ENCODE measurements at regions of chr13 and their contacts with region 1.

Region 1: GRCh38 chr13:95191821-95192563 is 109.3 kb downstream of the ABCC4 start:
- DNase-seq: peak; percentile 72 to 89 (median 76)
- ATAC-seq: peak; percentile 81 to 96 (median 92)
- H3K4me3 ChIP-seq: no peak overlapping the region
- H3K27ac ChIP-seq: no peak overlapping the region
- H3K4me1 ChIP-seq: peaks cover 0 to 2% (median 0%) of the 10 kb centered on the region in 12 donors
- H3K27me3 ChIP-seq: no peaks in the 10 kb centered on the region
- CTCF ChIP-seq: peak; percentile 77 to 90 (median 86)
- POLR2A ChIP-seq: no peak

Region 2: GRCh38 chr13:95267662-95268342 is 75.8 kb after region 1 on chr13:
- intact Hi-C with region 1: no loop called
- DNase-seq: no peak
- ATAC-seq: no peak
- H3K4me3 ChIP-seq: no peak overlapping the region
- H3K27ac ChIP-seq: peak overlapping the region in 1 of 12 donors; percentile 79
- H3K4me1 ChIP-seq: peaks cover 0 to 17% (median 0%) of the 10 kb centered on the region in 12 donors
- H3K27me3 ChIP-seq: no peaks in the 10 kb centered on the region
- CTCF ChIP-seq: no peak
- POLR2A ChIP-seq: no peak

Region 3: DNA sequence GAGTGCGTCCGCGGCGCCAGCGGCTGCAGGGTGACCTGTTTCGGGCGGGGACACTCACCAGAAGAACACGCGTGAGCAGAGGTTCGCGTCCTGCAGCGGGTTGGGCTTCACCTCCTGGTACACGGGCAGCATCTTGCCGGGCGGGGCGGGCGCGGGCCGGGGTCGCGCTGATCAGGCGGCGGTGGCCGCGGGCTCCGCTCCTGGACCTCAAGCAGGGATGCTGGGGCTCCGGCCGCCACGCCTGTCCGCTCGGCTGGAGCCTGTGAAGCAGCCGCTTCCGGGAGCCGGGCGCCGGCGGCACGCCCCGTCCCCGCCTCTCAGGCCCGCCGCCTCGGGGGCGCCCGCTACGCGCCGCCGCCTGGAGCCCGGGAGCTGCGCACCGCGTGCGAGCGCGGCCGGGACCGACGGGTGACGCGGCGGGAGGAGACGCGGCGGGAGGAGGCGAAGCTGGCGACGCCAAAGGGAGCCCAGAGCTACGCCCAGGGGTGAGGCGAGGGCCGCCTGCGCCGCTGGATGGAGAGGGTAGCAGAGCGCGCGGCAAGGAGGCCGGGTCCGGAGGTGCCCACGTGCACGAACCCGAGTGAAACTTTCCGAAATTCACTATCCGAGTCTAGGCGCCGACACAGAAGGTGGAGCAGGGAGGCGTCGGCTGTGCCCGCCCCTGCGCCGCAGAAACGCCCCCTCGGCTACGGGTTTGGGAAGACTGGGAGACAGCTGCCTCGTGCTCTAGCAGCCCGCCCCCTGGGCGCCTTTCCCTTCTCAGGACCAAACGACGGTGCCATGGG is 109.4 kb after region 1 on chr13 and contains the start of gene ABCC4:
- intact Hi-C with region 1: loop called in 8 of 10 experiments (anchors 5 to 10 kb)
- DNase-seq: peak; percentile 66 to 81 (median 73)
- ATAC-seq: peak; percentile 35 to 93 (median 79)
- H3K4me3 ChIP-seq: peak within 1 kb of the TSS; percentile 61 to 97 (median 78)
- H3K27ac ChIP-seq: peak within 1 kb of the TSS; percentile 49 to 93 (median 77)
- H3K4me1 ChIP-seq: peaks cover 0 to 34% (median 9%) of the 10 kb centered on the region in 12 donors
- H3K27me3 ChIP-seq: no peaks in the 10 kb centered on the region
- CTCF ChIP-seq: peak in 2 of 12 donors; percentile 5 to 19
- POLR2A ChIP-seq: no peak
- total RNA-seq, gene ABCC4: 2.5 to 9.0 (median 5.5) TPM

Region 4: GRCh38 chr13:95378603-95379002 is 186.6 kb after region 1 on chr13:
- intact Hi-C with region 1: loop called in 9 of 10 experiments (anchors 1 to 5 kb)
- DNase-seq: peak in 3 of 5 donors; percentile 41 to 65 (median 56)
- ATAC-seq: peak; percentile 69 to 95 (median 92)
- H3K4me3 ChIP-seq: no peak overlapping the region
- H3K27ac ChIP-seq: peak overlapping the region in 3 of 12 donors; percentile 9 to 46 (median 18)
- H3K4me1 ChIP-seq: peaks cover 0 to 11% (median 6%) of the 10 kb centered on the region in 12 donors
- H3K27me3 ChIP-seq: no peaks in the 10 kb centered on the region
- CTCF ChIP-seq: no peak
- POLR2A ChIP-seq: no peak

Region 5: GRCh38 chr13:95403828-95404522 is 212.0 kb after region 1 on chr13:
- intact Hi-C with region 1: loop called (anchors 1 to 2 kb)
- DNase-seq: peak; percentile 81 to 90 (median 82)
- ATAC-seq: peak; percentile 72 to 96 (median 94)
- H3K4me3 ChIP-seq: peak overlapping the region in 10 of 12 donors; percentile 25 to 54 (median 44)
- H3K27ac ChIP-seq: no peak overlapping the region
- H3K4me1 ChIP-seq: peaks cover 0 to 8% (median 5%) of the 10 kb centered on the region in 12 donors
- H3K27me3 ChIP-seq: peaks cover 0 to 4% (median 0%) of the 10 kb centered on the region in 9 donors
- CTCF ChIP-seq: peak; percentile 89 to 97 (median 93)
- POLR2A ChIP-seq: no peak

Measured in heart left ventricle (tissue), 16 donors.